ENCODE measurements at regions of chr3 and their contacts with region 1.

Region 1: GRCh38 chr3:138923531-138923994 is 23.4 kb downstream of the FOXL2 start:
- DNase-seq: peak; percentile 92
- ATAC-seq: peak; percentile 98
- H3K4me3 Mint-ChIP-seq: no peak overlapping the region
- H3K27ac Mint-ChIP-seq: no peak overlapping the region
- H3K4me1 Mint-ChIP-seq: no peaks in the 10 kb centered on the region
- H3K27me3 Mint-ChIP-seq: peaks cover 2% of the 10 kb centered on the region

Region 2: GRCh38 chr3:136929984-136930670 is 1993.4 kb before region 1 on chr3:
- CTCF ChIA-PET with region 1: no interaction called
- POLR2A ChIA-PET with region 1: no interaction called
- intact Hi-C with region 1: no loop called
- DNase-seq: no peak
- ATAC-seq: no peak
- H3K4me3 Mint-ChIP-seq: no peak overlapping the region
- H3K27ac Mint-ChIP-seq: no peak overlapping the region
- H3K4me1 Mint-ChIP-seq: peaks cover 58% of the 10 kb centered on the region
- H3K27me3 Mint-ChIP-seq: no peaks in the 10 kb centered on the region

Region 3: DNA sequence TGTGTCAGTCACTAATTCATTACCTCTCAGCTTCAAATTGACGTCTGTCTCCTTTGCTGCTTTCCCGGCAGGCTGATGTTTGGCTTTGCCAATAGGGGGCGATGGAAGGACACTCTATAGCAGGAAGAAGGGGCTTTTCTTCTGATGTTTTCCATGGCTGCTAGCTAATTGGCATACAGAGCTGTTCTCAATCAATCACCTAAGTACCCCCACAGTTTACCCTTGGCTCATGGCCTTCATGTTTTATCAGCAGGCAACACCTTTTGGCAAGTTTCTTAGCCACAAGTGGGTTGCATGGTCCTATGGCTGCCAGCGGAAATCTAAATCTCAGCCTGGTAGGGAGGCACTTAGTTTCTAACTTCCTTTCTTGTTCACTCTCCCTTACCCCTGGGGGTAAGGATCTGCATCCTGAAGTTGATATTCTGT is 444.1 kb before region 1 on chr3:
- CTCF ChIA-PET with region 1: interaction called, 7 read pairs
- POLR2A ChIA-PET with region 1: no interaction called
- intact Hi-C with region 1: loop called (anchors 1 to 2 kb)
- DNase-seq: peak; percentile 65
- ATAC-seq: peak; percentile 42
- H3K4me3 Mint-ChIP-seq: no peak overlapping the region
- H3K27ac Mint-ChIP-seq: no peak overlapping the region
- H3K4me1 Mint-ChIP-seq: no peaks in the 10 kb centered on the region
- H3K27me3 Mint-ChIP-seq: peaks cover 9% of the 10 kb centered on the region

Region 4: DNA sequence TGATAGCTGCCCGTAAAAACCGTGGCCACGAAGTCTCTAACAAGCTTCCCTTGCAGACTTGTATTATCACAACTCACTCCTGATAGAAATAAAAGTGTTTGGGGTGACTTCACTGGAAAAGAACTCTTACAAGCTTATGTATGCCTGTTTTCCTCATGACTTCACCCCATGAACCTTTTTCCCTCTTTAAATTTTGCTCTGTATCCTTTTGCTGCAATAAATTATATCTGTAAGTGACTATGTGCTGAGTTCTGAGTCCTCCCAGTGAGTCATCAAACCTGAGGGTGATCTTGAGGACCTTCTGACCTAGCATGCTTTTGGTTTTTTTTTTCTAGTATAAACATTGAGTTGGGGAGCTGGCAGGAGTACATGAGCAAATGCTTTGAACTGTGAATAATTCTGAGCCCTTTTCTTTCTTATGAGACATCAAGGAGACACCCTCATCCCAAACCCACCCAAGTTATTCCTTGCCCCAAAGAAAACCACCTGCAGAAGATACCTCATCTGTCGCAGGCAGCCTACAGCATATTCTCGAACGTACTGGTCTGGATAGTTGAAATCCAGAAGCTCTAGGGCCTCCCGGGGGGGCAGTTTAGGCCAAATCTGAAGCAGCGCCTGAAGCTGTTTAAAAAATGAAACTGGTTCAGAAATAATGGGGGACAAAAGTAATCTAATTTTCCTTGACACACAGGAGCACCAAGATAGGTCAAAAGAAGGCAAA is 229.1 kb before region 1 on chr3:
- CTCF ChIA-PET with region 1: interaction called, 212 read pairs
- POLR2A ChIA-PET with region 1: interaction called, 3 read pairs
- intact Hi-C with region 1: no loop called
- DNase-seq: no peak
- ATAC-seq: no peak
- H3K4me3 Mint-ChIP-seq: no peak overlapping the region
- H3K27ac Mint-ChIP-seq: no peak overlapping the region
- H3K4me1 Mint-ChIP-seq: no peaks in the 10 kb centered on the region
- H3K27me3 Mint-ChIP-seq: no peaks in the 10 kb centered on the region

Region 5: GRCh38 chr3:138908846-138909245 is 14.7 kb before region 1 on chr3:
- CTCF ChIA-PET with region 1: interaction called, 12 read pairs
- POLR2A ChIA-PET with region 1: no interaction called
- intact Hi-C with region 1: no loop called
- DNase-seq: no peak
- ATAC-seq: no peak
- H3K4me3 Mint-ChIP-seq: no peak overlapping the region
- H3K27ac Mint-ChIP-seq: no peak overlapping the region
- H3K4me1 Mint-ChIP-seq: no peaks in the 10 kb centered on the region
- H3K27me3 Mint-ChIP-seq: no peaks in the 10 kb centered on the region

Region 6: DNA sequence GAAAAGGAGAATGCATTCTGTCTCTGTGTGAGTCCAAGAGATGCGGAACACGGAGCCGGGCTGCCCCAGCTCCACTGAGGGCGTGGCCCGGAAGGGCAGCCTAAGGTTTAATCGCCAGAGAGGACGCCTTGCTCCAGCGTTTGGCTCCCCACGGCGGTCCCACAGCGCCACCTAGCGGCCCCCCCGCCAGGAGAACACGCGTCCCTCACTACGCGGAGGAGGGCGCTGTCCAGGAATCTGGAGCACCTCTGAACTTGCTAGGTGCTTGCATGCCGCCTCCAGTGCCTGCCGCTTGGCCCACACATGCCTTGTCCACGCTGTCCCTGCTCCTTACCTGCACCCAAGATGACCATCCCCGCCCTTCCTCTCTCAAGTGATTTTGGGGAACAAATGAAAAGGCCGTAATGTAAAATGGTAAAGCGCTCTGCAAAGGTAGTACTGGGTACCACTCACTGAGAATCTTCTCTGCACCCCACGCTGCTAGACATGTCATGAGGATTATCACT is 405.8 kb after region 1 on chr3:
- CTCF ChIA-PET with region 1: interaction called, 4 read pairs
- POLR2A ChIA-PET with region 1: no interaction called
- intact Hi-C with region 1: loop called in 1 of 2 experiments (anchors 1 kb)
- DNase-seq: peak; percentile 95
- ATAC-seq: peak; percentile 98
- H3K4me3 Mint-ChIP-seq: peak overlapping the region; percentile 25
- H3K27ac Mint-ChIP-seq: no peak overlapping the region
- H3K4me1 Mint-ChIP-seq: peaks cover 7% of the 10 kb centered on the region
- H3K27me3 Mint-ChIP-seq: peaks cover 19% of the 10 kb centered on the region

Region 7: DNA sequence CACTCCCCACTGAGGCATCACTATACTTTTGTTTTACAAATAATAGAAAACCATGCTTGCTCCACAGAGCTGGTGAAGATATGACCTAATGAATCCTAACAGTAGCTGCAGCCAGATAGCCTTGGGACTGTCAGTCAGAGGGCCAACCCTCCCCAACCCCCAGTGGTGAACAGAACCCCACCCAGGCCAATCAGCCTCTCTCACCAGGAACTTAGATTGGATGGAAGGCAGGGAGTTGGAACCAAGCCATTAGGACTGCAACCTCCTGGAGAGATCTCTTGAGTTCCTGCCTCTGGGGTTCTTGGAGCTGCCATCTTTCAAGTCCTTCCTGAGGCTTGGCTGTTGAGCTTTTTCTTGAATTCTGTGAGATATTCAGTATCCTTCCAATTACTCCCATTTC is 417.2 kb after region 1 on chr3:
- CTCF ChIA-PET with region 1: no interaction called
- POLR2A ChIA-PET with region 1: no interaction called
- intact Hi-C with region 1: no loop called
- DNase-seq: no peak
- ATAC-seq: no peak
- H3K4me3 Mint-ChIP-seq: no peak overlapping the region
- H3K27ac Mint-ChIP-seq: no peak overlapping the region
- H3K4me1 Mint-ChIP-seq: peaks cover 8% of the 10 kb centered on the region
- H3K27me3 Mint-ChIP-seq: peaks cover 3% of the 10 kb centered on the region